Caco-2 (cell line): ENCODE measurements at regions of chrX and their contacts with region 1.

Region 1: DNA sequence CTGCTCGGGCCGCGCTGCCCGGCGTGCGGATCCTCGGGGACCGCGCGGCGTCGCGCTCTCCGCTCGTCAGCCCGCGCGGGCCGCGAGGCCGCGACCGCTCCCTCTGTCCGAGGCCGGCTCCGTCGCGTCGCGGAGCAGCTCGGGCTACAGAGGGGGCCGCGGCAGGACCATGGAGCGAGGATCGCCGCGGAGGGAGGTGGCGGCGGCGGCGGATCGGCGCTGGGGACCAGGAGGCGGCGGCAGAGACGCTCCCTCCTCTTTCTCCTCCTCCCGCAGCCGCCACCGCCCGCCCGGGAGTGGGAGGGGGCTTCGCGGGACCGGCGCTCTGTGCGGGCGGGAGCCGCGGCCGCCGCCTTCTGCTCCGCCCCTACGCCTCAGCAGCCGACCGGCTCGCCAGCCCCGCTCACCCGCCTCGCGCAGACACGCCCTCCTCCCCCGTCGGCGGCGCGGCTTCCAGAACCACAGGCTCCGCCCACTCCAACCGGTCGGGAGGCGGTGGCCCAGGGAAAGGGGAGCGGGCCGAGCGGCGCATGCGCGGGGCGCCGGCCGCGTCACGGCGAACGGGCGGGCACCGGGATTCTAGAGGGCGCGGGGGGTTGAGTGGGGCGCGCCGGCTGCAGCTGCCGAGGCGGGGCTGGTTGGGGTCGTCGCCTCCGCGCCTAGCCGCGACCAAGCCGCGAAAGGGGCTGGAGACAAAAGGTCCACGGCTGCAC is at the start of gene CASK:
- DNase-seq: peak; percentile 93 to 95
- H3K4me3 ChIP-seq: peak within 1 kb of the TSS; percentile 63
- H3K4me3 Mint-ChIP-seq: peak within 1 kb of the TSS; percentile 98
- H3K27ac Mint-ChIP-seq: peak within 1 kb of the TSS; percentile 88
- H3K4me1 ChIP-seq: peaks cover 6% of the 10 kb centered on the region; the same call in 1 of the 2 replicates
- H3K4me1 Mint-ChIP-seq: no peaks in the 10 kb centered on the region
- H3K27me3 ChIP-seq: no peaks in the 10 kb centered on the region
- H3K27me3 Mint-ChIP-seq: no peaks in the 10 kb centered on the region
- CTCF ChIP-seq: peak in 1 of 2 experiments; percentile 13
- total RNA-seq, gene CASK: 163 and 174 TPM in 2 replicates

Region 2: DNA sequence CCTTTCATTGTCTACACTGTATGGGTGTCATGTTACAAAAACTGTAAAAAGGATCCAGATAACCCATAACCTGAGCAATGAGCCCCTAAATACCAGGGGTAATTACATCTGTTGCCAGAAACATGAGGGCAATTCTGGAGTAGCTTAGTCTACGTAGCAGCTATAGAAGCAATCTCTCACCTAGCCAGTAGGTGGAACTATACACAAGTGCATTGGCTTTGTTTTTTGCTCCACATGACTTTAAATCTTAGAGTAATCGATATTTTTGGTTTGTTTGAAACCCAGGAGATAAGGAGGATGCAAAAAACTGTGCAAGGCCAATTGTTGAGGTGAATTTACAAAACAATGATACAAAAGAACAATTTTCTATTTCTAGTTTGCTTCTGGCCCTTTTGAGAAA is 141.9 kb before region 1 on chrX:
- CTCF ChIA-PET with region 1: no interaction called
- POLR2A ChIA-PET with region 1: no interaction called
- intact Hi-C with region 1: loop called (anchors 5 kb)
- DNase-seq: peak in 1 of 2 experiments; percentile 30
- H3K4me3 ChIP-seq: no peak overlapping the region
- H3K4me3 Mint-ChIP-seq: no peak overlapping the region
- H3K27ac Mint-ChIP-seq: no peak overlapping the region
- H3K4me1 ChIP-seq: 0 out of 2 replicates have a peak, but pooled peaks cover 9% of the 10 kb centered on the region
- H3K4me1 Mint-ChIP-seq: no peaks in the 10 kb centered on the region
- H3K27me3 ChIP-seq: no peaks in the 10 kb centered on the region
- H3K27me3 Mint-ChIP-seq: no peaks in the 10 kb centered on the region
- CTCF ChIP-seq: peak; percentile 47 to 65

Region 3: GRCh38 chrX:41823402-41823801 is 100.0 kb before region 1 on chrX:
- CTCF ChIA-PET with region 1: no interaction called
- POLR2A ChIA-PET with region 1: no interaction called
- intact Hi-C with region 1: loop called (anchors 2 kb)
- DNase-seq: peak; percentile 48 to 53
- H3K4me3 ChIP-seq: no peak overlapping the region
- H3K4me3 Mint-ChIP-seq: peak overlapping the region; percentile 64
- H3K27ac Mint-ChIP-seq: peak overlapping the region; percentile 82
- H3K4me1 ChIP-seq: peaks cover 29% of the 10 kb centered on the region
- H3K4me1 Mint-ChIP-seq: peaks cover 30% of the 10 kb centered on the region
- H3K27me3 ChIP-seq: no peaks in the 10 kb centered on the region
- H3K27me3 Mint-ChIP-seq: no peaks in the 10 kb centered on the region
- CTCF ChIP-seq: no peak

Region 4: DNA sequence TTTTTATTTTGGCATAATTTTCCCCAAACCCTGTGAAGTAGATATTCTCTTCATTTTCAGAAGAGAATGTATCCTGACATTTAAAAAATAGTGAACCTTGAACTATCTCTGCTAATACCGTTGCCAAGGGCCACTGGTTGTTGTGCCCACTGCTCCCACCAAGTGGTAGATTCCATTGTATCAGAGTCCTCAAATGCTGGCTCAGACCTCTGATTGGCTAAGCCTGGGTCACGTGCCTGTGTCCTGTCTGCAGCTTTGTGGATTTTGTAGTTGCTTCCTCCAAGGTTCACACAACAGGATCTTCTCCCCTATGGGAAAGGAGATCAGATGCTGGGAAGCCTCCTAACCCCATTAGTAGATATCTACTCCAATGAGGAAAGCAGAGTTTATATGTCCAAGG is 104.7 kb after region 1 on chrX:
- CTCF ChIA-PET with region 1: interaction called, 4 read pairs
- POLR2A ChIA-PET with region 1: no interaction called
- intact Hi-C with region 1: loop called (anchors 5 kb)
- DNase-seq: peak; percentile 68 to 76
- H3K4me3 ChIP-seq: no peak overlapping the region
- H3K4me3 Mint-ChIP-seq: peak overlapping the region; percentile 62
- H3K27ac Mint-ChIP-seq: peak overlapping the region; percentile 92
- H3K4me1 ChIP-seq: peaks cover 23% of the 10 kb centered on the region
- H3K4me1 Mint-ChIP-seq: peaks cover 12% of the 10 kb centered on the region
- H3K27me3 ChIP-seq: no peaks in the 10 kb centered on the region
- H3K27me3 Mint-ChIP-seq: no peaks in the 10 kb centered on the region
- CTCF ChIP-seq: no peak

Region 5: DNA sequence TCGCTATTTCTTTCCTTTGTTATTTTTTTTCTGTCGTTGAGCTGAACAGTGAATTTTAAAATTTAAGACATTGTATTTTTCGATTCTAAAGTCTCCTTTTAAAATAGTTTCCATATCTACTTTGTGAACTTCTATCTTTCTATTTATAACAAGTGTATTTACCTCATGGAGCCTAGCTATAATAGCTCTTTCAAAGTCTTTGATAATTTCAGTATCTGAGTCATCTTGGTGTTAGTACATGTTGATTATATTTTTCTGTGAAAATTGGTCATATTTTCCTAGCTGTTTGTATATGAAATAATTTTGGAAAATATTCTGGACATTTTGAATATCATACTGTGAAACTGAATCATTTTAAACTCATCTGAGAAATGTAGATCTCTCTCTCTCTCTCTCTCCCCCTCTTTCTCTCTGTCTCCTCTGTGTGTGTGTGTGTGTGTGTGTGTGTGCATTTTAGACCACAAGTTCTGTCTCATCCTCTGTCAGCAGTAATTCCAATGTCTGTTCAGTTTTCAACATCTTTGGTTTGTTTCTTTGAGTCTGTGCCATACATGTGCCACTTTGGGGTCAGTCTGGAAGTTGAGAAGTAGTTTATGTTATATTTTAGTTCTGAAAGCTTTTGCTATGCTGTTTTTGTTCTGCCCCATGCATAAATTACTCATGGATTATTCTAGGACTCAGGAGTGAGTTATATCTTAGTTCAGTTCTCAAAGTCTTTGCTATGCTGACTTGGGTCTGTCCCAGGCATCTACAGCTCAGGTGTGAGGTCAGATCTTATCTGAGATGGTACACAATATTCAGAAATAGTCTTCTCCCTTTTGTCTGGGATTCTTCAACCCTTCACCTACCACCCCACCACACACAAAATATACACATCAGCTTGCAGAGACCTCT is 366.3 kb after region 1 on chrX:
- CTCF ChIA-PET with region 1: no interaction called
- POLR2A ChIA-PET with region 1: no interaction called
- intact Hi-C with region 1: loop called (anchors 10 kb)
- DNase-seq: no peak
- H3K4me3 ChIP-seq: no peak overlapping the region
- H3K4me3 Mint-ChIP-seq: no peak overlapping the region
- H3K27ac Mint-ChIP-seq: no peak overlapping the region
- H3K4me1 ChIP-seq: no peaks in the 10 kb centered on the region
- H3K4me1 Mint-ChIP-seq: no peaks in the 10 kb centered on the region
- H3K27me3 ChIP-seq: no peaks in the 10 kb centered on the region
- H3K27me3 Mint-ChIP-seq: no peaks in the 10 kb centered on the region
- CTCF ChIP-seq: no peak